ENCODE measurements at regions of chr15 and their contacts with region 1.

Region 1: DNA sequence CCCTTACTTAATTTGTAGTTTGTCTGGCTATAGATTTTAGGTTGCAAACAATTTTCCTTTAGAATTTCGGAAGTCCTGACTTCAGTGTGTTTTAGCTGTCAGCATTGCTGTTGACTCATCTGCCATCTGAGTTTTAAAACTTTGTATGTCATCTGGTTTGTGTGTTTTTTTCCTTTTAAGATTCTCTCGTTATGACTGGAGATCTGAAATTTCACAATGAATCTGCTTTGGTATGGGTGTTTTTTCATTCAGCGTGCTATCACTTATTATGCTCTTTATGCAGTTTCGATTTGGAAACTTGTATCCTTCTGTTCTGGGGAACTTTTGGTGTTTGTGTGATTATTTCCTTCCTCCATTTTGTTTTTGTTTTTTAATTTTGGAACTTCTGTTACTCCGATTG is 53.7 kb upstream of the ZNF280D start:
- DNase-seq: no peak
- H3K4me3 Mint-ChIP-seq: peak overlapping the region; percentile 9
- H3K27ac Mint-ChIP-seq: peak overlapping the region; percentile 70
- H3K4me1 Mint-ChIP-seq: peaks cover 17% of the 10 kb centered on the region
- H3K27me3 Mint-ChIP-seq: no peaks in the 10 kb centered on the region

Region 2: DNA sequence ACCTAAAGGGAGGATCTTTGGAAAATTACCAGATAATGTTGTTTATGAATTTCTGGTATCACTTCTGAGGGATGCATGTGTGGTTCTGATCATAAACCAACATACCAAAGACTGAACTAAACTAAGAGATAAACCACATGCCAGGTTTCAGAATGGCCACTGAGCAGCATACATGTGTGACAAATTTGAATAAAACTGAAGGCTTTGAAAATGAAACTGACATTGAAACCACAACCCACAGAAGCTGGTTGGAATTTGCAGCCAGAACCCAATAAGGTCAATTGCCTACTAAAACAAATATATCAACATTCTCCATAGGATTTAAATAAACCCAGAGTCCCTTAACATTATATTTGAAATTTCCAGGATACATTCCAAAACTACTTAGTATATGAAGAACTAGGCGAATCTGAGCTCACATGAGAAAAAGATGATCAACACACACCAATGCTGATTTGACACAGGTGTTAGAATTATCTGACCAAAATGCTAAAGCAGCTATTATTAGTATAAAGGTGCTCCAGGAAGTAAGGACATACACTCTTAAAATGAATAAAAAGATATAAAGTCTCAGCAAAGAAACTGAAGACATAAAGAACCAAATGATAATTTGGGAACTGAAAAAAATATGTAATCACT is 178.7 kb before region 1 on chr15:
- intact Hi-C with region 1: loop called (anchors 2 kb)
- DNase-seq: no peak
- H3K4me3 Mint-ChIP-seq: no peak overlapping the region
- H3K27ac Mint-ChIP-seq: no peak overlapping the region
- H3K4me1 Mint-ChIP-seq: peaks cover 15% of the 10 kb centered on the region
- H3K27me3 Mint-ChIP-seq: peaks cover 14% of the 10 kb centered on the region

Region 3: GRCh38 chr15:56732921-56733797 is 53.8 kb before region 1 on chr15 and contains the start of gene ZNF280D:
- intact Hi-C with region 1: loop called (anchors 1 kb)
- DNase-seq: peak; percentile 77
- H3K4me3 Mint-ChIP-seq: peak within 1 kb of the TSS; percentile 95
- H3K27ac Mint-ChIP-seq: peak within 1 kb of the TSS; percentile 99
- H3K4me1 Mint-ChIP-seq: peaks cover 47% of the 10 kb centered on the region
- H3K27me3 Mint-ChIP-seq: peaks cover 3% of the 10 kb centered on the region
- total RNA-seq, gene ZNF280D: 29.9 and 30.5 TPM in 2 replicates

Region 4: GRCh38 chr15:56805466-56806146 is 18.6 kb after region 1 on chr15:
- intact Hi-C with region 1: loop called (anchors 1 kb)
- DNase-seq: no peak
- H3K4me3 Mint-ChIP-seq: no peak overlapping the region
- H3K27ac Mint-ChIP-seq: peak overlapping the region; percentile 5
- H3K4me1 Mint-ChIP-seq: no peaks in the 10 kb centered on the region
- H3K27me3 Mint-ChIP-seq: peaks cover 3% of the 10 kb centered on the region

Region 5: GRCh38 chr15:56901931-56902330 is 115.0 kb after region 1 on chr15:
- intact Hi-C with region 1: no loop called
- DNase-seq: no peak
- H3K4me3 Mint-ChIP-seq: no peak overlapping the region
- H3K27ac Mint-ChIP-seq: no peak overlapping the region
- H3K4me1 Mint-ChIP-seq: peaks cover 3% of the 10 kb centered on the region
- H3K27me3 Mint-ChIP-seq: no peaks in the 10 kb centered on the region